Activated CD8-positive, alpha-beta T cell treated with anti-CD3 and anti-CD28 coated beads for 36 hours (primary cell): ENCODE measurements at regions of chr16 and their contacts with region 1.

Region 1: GRCh38 chr16:70553645-70554044 is 30.0 kb downstream of the SF3B3 start:
- DNase-seq: no peak
- ATAC-seq: no peak
- H3K4me3 Mint-ChIP-seq: no peak overlapping the region
- H3K27ac Mint-ChIP-seq: peak overlapping the region; percentile 34
- H3K4me1 Mint-ChIP-seq: peaks cover 30% of the 10 kb centered on the region
- H3K27me3 Mint-ChIP-seq: no peaks in the 10 kb centered on the region
- CTCF ChIP-seq: no peak

Region 2: DNA sequence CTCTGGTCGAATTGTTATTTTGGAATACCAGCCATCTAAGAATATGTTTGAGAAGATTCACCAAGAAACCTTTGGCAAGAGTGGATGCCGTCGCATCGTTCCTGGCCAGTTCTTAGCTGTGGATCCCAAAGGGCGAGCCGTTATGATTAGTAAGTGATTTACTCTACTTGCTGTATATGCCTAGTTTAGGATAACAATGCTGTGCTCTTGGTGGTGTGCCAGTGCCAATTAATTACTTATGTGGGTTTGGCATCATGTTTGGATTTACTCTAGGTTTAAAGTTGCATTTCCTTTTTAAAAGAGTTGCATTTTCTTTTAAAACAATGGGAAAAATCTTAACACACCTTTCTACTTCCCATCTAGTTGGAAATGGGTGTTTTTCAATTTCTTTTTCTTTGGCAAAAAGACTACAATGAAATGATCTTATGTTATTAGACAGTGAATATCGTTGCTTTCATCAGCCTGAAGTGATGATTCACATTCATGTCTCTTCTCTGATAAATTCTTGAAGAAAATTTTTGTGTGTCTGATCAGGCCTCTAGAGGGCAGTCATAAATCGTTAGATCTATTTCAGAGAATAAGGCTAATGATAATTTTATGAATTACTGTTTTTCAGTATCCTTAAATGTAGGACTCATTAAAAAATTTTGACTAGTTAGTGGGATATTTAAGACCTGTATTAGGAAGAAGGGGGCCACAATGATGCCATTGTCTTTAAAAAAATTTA is 24.4 kb before region 1 on chr16:
- CTCF ChIA-PET with region 1: interaction called, 10 read pairs
- POLR2A ChIA-PET with region 1: interaction called, 10 read pairs
- intact Hi-C with region 1: no loop called
- DNase-seq: no peak
- ATAC-seq: peak; percentile 53
- H3K4me3 Mint-ChIP-seq: peak overlapping the region; percentile 49
- H3K27ac Mint-ChIP-seq: peak overlapping the region; percentile 67
- H3K4me1 Mint-ChIP-seq: peaks cover 57% of the 10 kb centered on the region
- H3K27me3 Mint-ChIP-seq: no peaks in the 10 kb centered on the region
- CTCF ChIP-seq: peak; percentile 47

Region 3: DNA sequence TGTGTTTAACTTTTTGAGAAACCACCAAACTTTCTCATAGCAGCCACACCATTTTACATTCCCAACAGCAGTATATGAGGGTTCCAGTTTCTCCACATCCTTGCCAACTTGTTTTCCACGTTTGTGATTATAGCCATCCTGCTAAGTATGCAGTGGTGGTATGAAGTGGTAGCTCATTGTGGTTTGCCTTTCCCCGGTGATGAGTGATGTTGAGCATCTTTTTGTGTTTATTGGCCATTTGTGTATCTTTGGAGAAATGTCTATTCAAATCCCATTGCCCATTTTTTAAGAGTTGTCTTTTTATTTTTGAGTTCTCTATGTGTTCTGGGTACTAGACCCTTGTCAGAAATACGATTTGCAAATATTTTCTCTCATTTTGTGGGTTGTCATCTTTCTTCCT is 12.7 kb before region 1 on chr16:
- CTCF ChIA-PET with region 1: no interaction called
- POLR2A ChIA-PET with region 1: interaction called, 10 read pairs
- intact Hi-C with region 1: no loop called
- DNase-seq: no peak
- ATAC-seq: no peak
- H3K4me3 Mint-ChIP-seq: no peak overlapping the region
- H3K27ac Mint-ChIP-seq: no peak overlapping the region
- H3K4me1 Mint-ChIP-seq: peaks cover 21% of the 10 kb centered on the region
- H3K27me3 Mint-ChIP-seq: no peaks in the 10 kb centered on the region
- CTCF ChIP-seq: no peak